ENCODE measurements at regions of chrX and their contacts with region 1.

Region 1: DNA sequence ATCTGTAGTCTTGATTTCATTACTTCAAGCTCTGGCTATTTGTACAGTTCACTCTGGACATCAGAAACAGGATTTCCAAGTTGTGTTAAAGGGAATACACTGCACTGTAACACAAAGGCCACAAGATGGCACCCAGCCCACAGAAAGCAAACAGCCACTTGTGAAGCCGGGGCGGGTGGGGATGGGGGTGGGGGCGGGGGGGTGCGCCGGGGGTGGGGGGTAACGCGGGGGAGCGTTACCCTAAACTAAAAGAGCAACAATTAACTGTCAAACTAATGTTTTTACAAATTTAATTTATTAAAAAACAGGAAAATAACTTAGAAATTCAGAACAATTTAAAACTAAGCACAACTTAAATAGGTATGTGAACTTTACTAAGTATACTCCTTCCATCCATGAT is 27.3 kb downstream of the PRDX4 start:
- DNase-seq: no peak

Region 2: DNA sequence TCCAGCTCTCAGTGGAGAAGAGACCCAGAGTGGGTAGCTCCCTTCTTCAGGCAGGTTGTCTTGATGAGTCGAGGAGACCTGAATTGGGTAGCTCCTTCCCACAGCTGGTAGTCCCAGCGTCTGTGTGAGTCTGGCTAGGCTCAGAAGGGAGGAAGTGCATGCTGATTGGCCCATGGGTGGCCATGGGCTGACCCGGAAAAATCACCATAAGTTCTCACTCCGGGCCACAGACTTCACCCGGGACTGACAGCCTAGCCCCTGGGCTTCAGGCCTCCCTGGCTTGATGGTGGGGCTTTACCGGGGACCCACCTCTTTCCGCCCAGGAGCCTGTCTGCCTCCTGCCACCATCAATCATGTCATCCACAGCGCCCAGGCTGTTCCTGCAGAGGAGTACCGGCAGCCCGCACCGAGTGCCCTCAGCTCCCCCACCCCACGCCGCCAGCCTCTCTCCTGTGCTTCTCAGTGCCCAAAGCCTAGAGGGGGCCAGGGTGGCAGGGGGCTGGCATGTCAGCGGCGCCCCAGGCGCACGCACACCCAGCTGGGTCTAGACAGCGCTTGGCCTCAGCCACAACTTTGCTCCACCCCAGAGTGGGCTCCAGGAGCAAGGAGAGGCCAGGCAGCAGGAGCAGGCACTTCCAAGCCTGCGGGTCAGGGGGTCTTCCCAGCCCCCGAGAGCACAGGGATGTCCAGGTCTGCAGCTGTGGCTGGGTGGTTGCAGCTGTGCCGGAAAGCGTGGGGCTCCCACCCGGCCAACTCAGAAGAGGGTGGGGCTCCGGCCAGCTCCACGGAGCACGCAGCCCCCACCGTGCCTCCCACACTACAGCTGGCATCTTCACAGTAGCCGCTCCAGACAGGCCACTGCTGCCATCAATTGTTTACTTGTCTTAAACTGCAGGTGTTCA is 72.3 kb after region 1 on chrX:
- intact Hi-C with region 1: no loop called
- DNase-seq: no peak

Region 3: DNA sequence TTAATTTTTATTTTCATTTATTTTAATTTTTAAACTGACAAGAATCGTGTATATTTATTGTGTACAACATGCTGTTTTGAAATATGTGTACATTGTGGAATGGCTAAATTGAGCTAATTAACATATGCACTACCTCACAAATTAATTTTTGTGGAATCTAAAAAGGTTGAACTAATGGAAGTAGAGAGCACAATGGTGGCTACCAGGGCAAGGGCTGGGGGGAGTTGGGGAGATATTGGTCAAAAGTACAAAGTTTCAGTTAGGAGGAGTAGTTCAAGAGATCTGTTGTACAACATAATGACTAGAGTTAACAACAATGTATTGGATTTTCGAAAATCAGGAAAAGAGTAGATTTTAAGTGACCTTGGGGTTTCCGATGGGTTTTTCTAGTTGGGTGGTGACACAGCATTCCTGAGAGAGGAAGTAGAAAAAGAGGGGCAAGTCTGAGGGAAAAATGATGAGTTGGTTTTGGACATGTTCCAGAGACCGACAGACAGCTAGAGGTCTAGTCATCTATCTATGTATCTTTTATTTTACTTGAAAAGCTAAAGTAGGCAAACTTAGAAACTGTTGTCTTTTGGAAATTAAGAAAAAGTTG is 189.9 kb after region 1 on chrX:
- intact Hi-C with region 1: loop called (anchors 5 kb)
- DNase-seq: no peak

Region 4: DNA sequence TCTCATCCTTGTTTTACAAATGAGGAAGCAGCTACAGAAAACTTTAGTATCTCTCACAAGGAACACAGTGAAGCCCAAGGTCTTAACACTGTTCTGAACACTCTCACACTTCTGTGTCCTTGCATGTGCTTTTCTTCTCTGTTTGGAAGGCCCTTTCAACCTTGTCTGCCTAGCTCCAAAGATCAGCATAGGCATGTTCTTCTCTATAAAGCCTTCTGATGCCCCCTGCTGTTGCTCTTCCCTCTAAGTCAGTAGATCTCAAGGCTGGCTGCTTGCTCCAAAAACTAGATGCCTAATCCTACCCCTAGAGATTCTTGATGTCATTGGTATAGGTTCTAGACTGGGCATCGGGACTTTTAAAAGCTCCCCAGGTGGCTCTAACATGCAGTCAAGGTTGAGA is 207.2 kb after region 1 on chrX:
- intact Hi-C with region 1: loop called (anchors 2 kb)
- DNase-seq: no peak

Region 5: GRCh38 chrX:24241822-24242648 is 547.4 kb after region 1 on chrX:
- intact Hi-C with region 1: loop called (anchors 10 kb)
- DNase-seq: no peak